ENCODE measurements at regions of chr5 and their contacts with region 1.

Region 1: DNA sequence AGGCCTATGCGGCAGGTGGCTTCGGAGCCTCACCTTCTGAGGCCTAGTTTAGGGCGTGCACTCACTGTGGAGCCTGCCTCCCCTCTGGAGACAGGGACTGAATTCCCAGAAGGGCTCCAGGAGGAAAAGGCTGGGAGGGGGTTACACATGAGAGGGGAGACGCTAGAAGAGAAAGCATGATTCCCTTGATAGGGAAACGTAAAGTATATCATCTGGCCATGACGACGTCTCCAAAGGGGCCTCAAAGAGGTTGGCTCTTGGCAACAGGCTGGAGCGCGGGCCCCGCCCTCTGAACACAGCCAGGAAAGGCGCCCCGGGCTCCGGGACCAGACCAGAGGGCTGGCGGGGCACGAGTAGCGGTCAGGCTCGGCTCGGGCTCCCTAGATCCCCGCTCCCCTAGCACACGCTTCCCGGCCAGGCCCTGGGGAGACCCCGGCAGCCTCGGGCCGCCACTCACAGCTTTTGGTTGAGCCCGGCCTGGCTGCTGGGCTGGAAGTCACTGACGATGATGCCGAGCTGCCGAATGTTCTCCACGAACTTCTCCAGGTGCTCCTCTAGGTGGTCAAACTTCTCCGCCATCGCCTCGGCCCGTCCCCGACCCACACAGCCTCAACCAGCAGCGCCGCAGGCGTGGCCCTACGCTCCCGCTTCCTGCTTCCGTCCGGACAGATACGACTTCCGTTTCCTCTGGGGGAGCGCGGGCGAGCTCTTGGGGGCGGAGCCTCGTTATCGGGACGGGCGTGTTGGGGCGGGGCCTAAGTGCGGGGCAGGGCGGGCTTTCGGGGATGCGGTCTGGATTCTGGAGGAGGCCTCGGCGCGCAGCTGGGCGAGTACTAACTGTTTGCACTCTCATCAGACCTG is at the start of gene MED10:
- DNase-seq: peak; percentile 90 to 97 (median 95)
- ATAC-seq: peak; percentile 95
- H3K4me3 ChIP-seq: peak within 1 kb of the TSS; percentile 94
- H3K4me3 Mint-ChIP-seq: peak within 1 kb of the TSS; percentile 100
- H3K27ac ChIP-seq: peak within 1 kb of the TSS; percentile 83 to 88
- H3K27ac Mint-ChIP-seq: peak within 1 kb of the TSS; percentile 98
- H3K4me1 ChIP-seq: peaks cover 38% of the 10 kb centered on the region
- H3K4me1 Mint-ChIP-seq: peaks cover 62% of the 10 kb centered on the region
- H3K27me3 ChIP-seq: no peaks in the 10 kb centered on the region
- H3K27me3 Mint-ChIP-seq: no peaks in the 10 kb centered on the region
- CTCF ChIP-seq: no peak
- total RNA-seq, gene MED10: 97.2 to 98.0 TPM

Region 2: GRCh38 chr5:5492087-5492933 is 885.8 kb before region 1 on chr5:
- CTCF ChIA-PET with region 1: no interaction called
- POLR2A ChIA-PET with region 1: interaction called, 3 read pairs
- intact Hi-C with region 1: loop called in 1 of 2 experiments (anchors 10 kb)
- DNase-seq: peak in 10 of 14 experiments; percentile 8 to 81 (median 28)
- ATAC-seq: peak; percentile 41
- H3K4me3 ChIP-seq: no peak overlapping the region
- H3K4me3 Mint-ChIP-seq: peak overlapping the region; percentile 69
- H3K27ac ChIP-seq: no peak overlapping the region
- H3K27ac Mint-ChIP-seq: no peak overlapping the region
- H3K4me1 ChIP-seq: peaks cover 21% of the 10 kb centered on the region
- H3K4me1 Mint-ChIP-seq: peaks cover 18% of the 10 kb centered on the region
- H3K27me3 ChIP-seq: no peaks in the 10 kb centered on the region
- H3K27me3 Mint-ChIP-seq: peaks cover 16% of the 10 kb centered on the region
- CTCF ChIP-seq: peak; percentile 64

Region 3: DNA sequence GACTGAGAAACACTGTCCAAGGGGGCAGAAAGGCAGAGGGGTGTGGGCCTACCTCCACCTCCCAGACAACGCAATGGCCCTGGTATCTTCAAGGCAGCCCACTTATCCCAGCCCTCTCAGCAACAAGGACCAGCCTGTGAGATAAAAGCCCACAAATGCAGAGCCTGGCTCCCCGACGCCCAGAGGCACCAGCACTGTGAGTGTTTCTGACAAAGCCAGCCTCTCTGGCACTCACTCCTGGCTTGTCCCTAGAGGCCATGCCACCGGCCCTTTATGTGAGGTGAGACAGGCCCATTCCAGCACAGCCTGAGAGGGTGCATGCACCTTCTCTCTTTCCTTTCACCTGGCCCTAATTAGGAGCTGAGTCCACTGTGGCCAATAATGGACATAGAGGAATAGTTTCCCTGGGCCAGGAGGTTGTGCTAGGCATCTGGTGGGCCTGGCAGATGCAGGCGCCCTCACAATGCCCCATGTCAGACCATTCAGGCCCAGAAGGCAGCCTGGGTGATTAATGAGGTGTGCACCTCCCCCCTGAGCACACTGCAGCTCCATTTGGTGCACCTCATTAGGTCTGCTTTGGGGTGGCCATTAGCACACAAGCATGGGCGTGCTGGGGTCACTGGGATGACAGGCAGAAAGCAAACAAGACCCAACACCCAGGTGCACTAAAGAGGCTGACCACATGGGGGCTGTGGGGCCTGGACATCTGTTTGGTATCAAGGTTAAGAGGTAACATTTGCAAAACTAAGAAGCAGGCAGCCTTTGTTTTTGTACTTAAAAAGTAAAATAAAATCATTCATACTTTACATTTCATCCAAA is 175.8 kb before region 1 on chr5:
- CTCF ChIA-PET with region 1: no interaction called
- POLR2A ChIA-PET with region 1: no interaction called
- intact Hi-C with region 1: no loop called
- DNase-seq: no peak
- ATAC-seq: no peak
- H3K4me3 ChIP-seq: no peak overlapping the region
- H3K4me3 Mint-ChIP-seq: no peak overlapping the region
- H3K27ac ChIP-seq: no peak overlapping the region
- H3K27ac Mint-ChIP-seq: no peak overlapping the region
- H3K4me1 ChIP-seq: no peaks in the 10 kb centered on the region
- H3K4me1 Mint-ChIP-seq: no peaks in the 10 kb centered on the region
- H3K27me3 ChIP-seq: no peaks in the 10 kb centered on the region
- H3K27me3 Mint-ChIP-seq: peaks cover 3% of the 10 kb centered on the region
- CTCF ChIP-seq: no peak

Region 4: GRCh38 chr5:6632917-6633468 is 254.9 kb after region 1 on chr5 and contains the starts of genes NSUN2 and SRD5A1:
- CTCF ChIA-PET with region 1: no interaction called
- POLR2A ChIA-PET with region 1: interaction called, 16 read pairs
- intact Hi-C with region 1: loop called (anchors 2 to 5 kb)
- DNase-seq: peak; percentile 78 to 97 (median 90)
- ATAC-seq: peak; percentile 88
- H3K4me3 ChIP-seq: peak within 1 kb of the TSS; percentile 87
- H3K4me3 Mint-ChIP-seq: peak within 1 kb of the TSS; percentile 90
- H3K27ac ChIP-seq: peak within 1 kb of the TSS; percentile 62 to 98
- H3K27ac Mint-ChIP-seq: peak within 1 kb of the TSS; percentile 93
- H3K4me1 ChIP-seq: peaks cover 33% of the 10 kb centered on the region
- H3K4me1 Mint-ChIP-seq: peaks cover 53% of the 10 kb centered on the region
- H3K27me3 ChIP-seq: no peaks in the 10 kb centered on the region
- H3K27me3 Mint-ChIP-seq: no peaks in the 10 kb centered on the region
- CTCF ChIP-seq: no peak
- total RNA-seq, gene NSUN2: 48.3 to 50.8 TPM
- total RNA-seq, gene SRD5A1: 2.3 to 3.0 TPM

Region 5: GRCh38 chr5:6745706-6746222 is 367.6 kb after region 1 on chr5:
- CTCF ChIA-PET with region 1: no interaction called
- POLR2A ChIA-PET with region 1: no interaction called
- intact Hi-C with region 1: loop called in 1 of 2 experiments (anchors 5 kb)
- DNase-seq: peak in 6 of 14 experiments; percentile 23 to 77 (median 54)
- ATAC-seq: peak; percentile 80
- H3K4me3 ChIP-seq: no peak overlapping the region
- H3K4me3 Mint-ChIP-seq: no peak overlapping the region
- H3K27ac ChIP-seq: no peak overlapping the region
- H3K27ac Mint-ChIP-seq: no peak overlapping the region
- H3K4me1 ChIP-seq: peaks cover 6% of the 10 kb centered on the region
- H3K4me1 Mint-ChIP-seq: peaks cover 9% of the 10 kb centered on the region
- H3K27me3 ChIP-seq: no peaks in the 10 kb centered on the region
- H3K27me3 Mint-ChIP-seq: no peaks in the 10 kb centered on the region
- CTCF ChIP-seq: peak; percentile 80